Gastrocnemius medialis (tissue), 4 donors: ENCODE measurements at regions of chr4 and their contacts with region 1.

Region 1: DNA sequence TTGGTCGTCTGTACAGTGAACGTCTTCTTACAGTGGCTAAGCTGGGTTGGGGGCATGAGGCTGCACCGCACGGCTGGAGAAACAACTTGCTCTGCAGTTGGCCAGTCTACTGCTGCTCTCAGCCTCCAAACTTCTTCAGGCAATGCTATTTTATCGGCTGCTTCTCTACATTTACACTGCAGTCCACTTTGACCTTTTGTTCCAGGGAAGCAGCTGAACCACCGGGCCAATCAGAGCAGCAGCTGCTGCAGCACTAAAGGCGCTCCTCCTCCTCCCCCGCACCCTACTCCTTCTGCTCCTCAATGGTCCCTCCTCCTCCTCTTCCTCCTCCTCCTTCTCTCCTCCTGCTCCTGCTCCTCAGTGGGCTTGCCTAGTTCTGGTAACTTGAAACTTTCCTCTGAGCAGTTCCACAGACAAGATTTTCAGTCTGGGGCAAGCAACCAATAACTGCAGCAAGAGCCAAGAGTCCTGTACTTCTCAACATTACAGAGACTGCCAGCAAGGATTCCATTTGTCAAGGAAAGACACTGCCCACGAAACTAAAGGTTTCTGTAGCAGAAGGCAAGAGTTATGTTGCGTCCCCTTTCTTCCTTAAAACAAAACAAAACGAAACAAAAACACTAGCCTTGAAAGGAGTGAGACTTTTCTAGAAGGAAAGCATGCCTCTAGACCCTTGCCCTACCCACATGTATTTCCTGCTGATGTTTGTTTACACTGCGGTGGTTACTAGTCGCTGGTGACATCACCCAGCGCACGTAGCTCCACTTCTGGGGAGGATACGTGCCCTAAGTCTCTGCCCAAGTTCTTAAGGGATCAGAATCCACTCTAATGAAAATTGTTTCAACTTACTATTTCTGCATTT is 125.7 kb upstream of the NAP1L5 start:
- DNase-seq: peak; percentile 85 to 86
- ATAC-seq: peak; percentile 90 to 94
- H3K4me3 ChIP-seq: peak overlapping the region; percentile 45 to 65 (median 58)
- H3K27ac ChIP-seq: peak overlapping the region; percentile 81 to 85 (median 84)
- H3K4me1 ChIP-seq: peaks cover 34 to 44% of the 10 kb centered on the region in 2 donors
- H3K27me3 ChIP-seq: no peaks in the 10 kb centered on the region
- CTCF ChIP-seq: no peak
- POLR2A ChIP-seq: peak; percentile 49 to 82

Region 2: DNA sequence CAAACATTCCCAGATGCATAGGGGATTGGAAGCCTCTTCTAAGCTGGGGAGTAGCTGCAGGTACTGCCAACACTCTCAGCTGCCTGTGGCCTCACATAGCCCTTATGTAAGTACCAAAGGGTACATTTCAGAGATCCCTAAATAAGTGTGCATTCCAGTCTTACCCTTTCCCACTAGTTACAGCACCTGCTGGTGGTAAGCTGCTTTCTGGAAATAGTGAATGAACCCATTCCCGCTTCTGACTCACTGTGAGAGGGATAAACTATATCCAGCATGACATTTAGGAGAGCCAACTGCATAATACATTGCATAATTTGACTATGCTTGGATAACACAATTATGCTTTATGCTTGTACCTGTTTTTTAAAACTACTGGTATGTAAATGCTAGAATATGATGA is 84.7 kb after region 1 on chr4:
- in situ Hi-C with region 1: no loop called
- intact Hi-C with region 1: loop called (anchors 5 kb)
- DNase-seq: peak; percentile 21 to 64
- ATAC-seq: peak; percentile 98 to 100
- H3K4me3 ChIP-seq: no peak overlapping the region
- H3K27ac ChIP-seq: peak overlapping the region in 3 of 4 donors; percentile 59 to 60 (median 59)
- H3K4me1 ChIP-seq: peaks cover 6 to 15% of the 10 kb centered on the region in 2 donors
- H3K27me3 ChIP-seq: no peaks in the 10 kb centered on the region
- CTCF ChIP-seq: no peak
- POLR2A ChIP-seq: no peak

Region 3: DNA sequence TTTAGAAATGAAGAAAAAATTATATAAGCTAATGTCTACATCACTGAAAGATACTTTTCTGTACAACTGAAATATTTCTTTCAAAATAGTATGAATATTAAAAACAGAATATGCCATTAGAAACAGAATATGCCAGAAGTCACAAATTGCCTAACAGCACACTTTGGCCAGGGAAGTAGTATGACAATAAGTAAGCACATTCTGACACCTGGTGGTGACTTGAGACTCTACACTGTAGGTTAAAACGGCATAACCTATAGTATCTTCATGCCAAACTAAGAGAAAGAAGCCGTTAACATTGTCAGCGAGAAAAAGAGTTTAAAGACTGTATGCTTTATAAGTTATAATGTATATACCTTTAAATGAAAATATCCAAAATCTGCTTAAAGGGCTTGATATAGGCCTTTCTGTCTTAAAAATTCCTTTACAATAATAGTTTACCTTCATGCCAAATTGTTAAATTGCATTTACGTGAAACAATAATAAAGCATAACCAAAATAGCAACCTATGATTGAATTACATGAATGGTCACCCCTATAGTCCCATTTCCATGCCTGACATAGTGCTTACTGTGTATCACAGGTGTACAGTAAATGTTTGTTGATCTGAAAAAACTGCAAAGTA is 200.9 kb after region 1 on chr4:
- in situ Hi-C with region 1: loop called (anchors 5 to 10 kb)
- intact Hi-C with region 1: loop called (anchors 1 kb)
- DNase-seq: peak; percentile 31 to 42
- ATAC-seq: peak; percentile 97 to 100
- H3K4me3 ChIP-seq: no peak overlapping the region
- H3K27ac ChIP-seq: no peak overlapping the region
- H3K4me1 ChIP-seq: peaks cover 8 to 15% of the 10 kb centered on the region in 2 donors
- H3K27me3 ChIP-seq: no peaks in the 10 kb centered on the region
- CTCF ChIP-seq: peak; percentile 83 to 92 (median 86)
- POLR2A ChIP-seq: no peak

Region 4: DNA sequence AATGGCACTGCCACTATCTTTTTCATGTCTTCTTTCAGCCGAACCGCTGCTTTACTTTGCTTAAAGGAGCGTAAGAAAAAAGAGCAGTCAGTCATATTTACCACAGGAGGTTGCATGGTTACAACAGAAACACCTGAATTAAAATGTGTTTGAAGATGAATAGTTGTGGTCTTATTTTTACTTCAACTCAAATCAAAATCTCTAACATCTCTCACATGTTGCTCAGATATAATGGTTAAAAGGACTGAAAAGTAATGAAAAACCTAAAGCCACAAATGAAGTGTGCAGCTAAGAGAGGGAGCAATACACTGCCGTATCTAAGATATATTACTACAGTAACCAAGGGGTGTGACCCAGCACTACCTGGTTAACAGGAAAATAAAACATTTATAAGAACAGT is 206.3 kb after region 1 on chr4:
- in situ Hi-C with region 1: loop called (anchors 5 to 10 kb)
- intact Hi-C with region 1: loop called (anchors 1 kb)
- DNase-seq: no peak
- ATAC-seq: no peak
- H3K4me3 ChIP-seq: no peak overlapping the region
- H3K27ac ChIP-seq: no peak overlapping the region
- H3K4me1 ChIP-seq: peaks cover 0 to 5% of the 10 kb centered on the region in 2 donors
- H3K27me3 ChIP-seq: no peaks in the 10 kb centered on the region
- CTCF ChIP-seq: no peak
- POLR2A ChIP-seq: no peak